CD4-positive, alpha-beta memory T cell (primary cell): ENCODE measurements at regions of chr4 and their contacts with region 1.

Region 1: DNA sequence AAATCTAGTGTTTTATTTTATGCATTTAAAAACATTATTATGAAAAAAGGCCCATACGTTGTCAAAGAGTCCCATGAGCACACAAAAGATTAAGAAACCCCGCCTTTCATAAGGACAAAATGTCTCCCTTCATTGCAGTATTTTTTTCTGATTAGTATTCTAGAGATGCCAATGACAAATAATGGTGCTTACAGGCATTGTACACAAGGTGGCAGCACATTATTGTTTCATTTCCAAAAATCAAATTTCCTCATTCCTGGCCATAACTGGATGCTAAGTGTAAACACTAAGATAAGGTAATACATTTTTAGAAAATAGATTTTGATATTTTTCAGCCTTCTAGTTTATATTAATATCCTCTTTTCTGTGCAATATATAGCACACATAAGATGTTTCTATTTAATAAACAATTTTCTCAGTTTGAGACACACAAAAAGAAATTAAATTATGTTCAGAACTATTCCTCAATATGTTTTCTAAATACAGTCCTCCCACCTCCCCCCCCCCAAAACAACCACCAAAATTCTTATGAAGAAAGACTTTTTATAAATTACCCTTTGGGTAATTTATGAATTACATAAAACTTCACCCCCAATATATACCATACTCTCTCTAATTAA is 47.7 kb downstream of the TIGD2 start:
- DNase-seq: peak in 4 of 5 donors; percentile 22 to 39 (median 34)
- H3K4me3 ChIP-seq: no peak overlapping the region
- H3K4me3 Mint-ChIP-seq: no peak overlapping the region
- H3K27ac ChIP-seq: no peak overlapping the region
- H3K27ac Mint-ChIP-seq: no peak overlapping the region
- H3K4me1 ChIP-seq: no peaks in the 10 kb centered on the region
- H3K4me1 Mint-ChIP-seq: peaks cover 0 to 2% (median 0%) of the 10 kb centered on the region in 4 donors
- H3K27me3 ChIP-seq: no peaks in the 10 kb centered on the region
- H3K27me3 Mint-ChIP-seq: peaks cover 0 to 1% of the 10 kb centered on the region in 2 donors

Region 2: DNA sequence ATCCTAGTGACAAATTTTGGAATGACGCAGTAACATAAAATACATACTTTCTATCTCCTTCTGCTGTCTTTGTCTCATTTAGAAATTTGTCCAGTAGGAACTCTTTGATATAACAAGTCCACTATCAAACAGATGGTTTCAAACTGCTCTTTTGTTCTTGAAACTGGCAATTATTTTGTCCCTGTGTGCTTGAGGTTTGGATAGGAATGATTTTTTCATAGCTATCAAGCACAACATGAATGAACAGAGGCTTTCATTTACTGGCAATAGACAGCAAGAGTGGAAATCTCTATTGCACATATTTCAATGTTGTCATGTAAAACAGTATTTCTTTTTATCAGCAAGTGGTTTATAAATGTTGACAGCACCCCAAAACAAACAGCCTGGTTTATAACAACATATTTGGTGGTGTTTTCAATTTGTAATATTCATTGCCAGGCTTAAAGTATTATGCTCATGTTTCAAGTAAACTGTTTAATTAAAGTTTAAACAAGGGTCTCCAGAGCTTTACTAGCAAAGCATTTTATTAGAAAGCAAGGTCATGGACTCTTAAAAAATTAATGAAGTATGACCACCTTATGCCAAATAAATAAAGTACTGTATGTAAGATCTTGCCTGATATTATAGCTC is 12.3 kb after region 1 on chr4:
- CTCF ChIA-PET with region 1: interaction called, 10 read pairs
- POLR2A ChIA-PET with region 1: no interaction called
- intact Hi-C with region 1: no loop called
- DNase-seq: no peak
- H3K4me3 ChIP-seq: no peak overlapping the region
- H3K4me3 Mint-ChIP-seq: no peak overlapping the region
- H3K27ac ChIP-seq: no peak overlapping the region
- H3K27ac Mint-ChIP-seq: no peak overlapping the region
- H3K4me1 ChIP-seq: no peaks in the 10 kb centered on the region
- H3K4me1 Mint-ChIP-seq: no peaks in the 10 kb centered on the region
- H3K27me3 ChIP-seq: no peaks in the 10 kb centered on the region
- H3K27me3 Mint-ChIP-seq: peaks cover 3 to 7% of the 10 kb centered on the region in 2 donors